ENCODE measurements at regions of chr7 and their contacts with region 1.

Region 1: DNA sequence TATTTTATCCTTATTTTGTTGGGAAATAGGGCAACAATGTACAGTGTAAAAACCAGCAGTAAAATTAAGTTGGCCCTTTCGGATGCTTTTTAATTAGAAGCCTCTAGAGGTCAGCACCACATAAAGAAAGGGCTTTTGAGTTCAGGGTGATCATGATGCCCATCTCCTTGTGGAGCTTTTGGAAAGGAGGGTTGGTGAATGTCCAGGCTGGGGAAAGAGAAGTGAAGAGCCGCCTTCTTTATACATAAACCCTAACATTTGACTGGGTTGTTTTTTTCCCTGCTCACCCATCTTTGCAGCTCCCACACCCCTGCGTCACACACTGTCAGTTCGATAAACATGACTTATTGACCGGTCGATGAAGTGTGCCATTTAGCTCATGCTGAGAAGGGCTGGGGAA is 29.8 kb downstream of the MTURN start:
- DNase-seq: peak; percentile 32 to 68
- H3K4me3 ChIP-seq: no peak overlapping the region
- H3K27ac ChIP-seq: no peak overlapping the region
- H3K4me1 ChIP-seq: peaks cover 52% of the 10 kb centered on the region
- H3K27me3 ChIP-seq: no peaks in the 10 kb centered on the region
- CTCF ChIP-seq: peak; percentile 86

Region 2: DNA sequence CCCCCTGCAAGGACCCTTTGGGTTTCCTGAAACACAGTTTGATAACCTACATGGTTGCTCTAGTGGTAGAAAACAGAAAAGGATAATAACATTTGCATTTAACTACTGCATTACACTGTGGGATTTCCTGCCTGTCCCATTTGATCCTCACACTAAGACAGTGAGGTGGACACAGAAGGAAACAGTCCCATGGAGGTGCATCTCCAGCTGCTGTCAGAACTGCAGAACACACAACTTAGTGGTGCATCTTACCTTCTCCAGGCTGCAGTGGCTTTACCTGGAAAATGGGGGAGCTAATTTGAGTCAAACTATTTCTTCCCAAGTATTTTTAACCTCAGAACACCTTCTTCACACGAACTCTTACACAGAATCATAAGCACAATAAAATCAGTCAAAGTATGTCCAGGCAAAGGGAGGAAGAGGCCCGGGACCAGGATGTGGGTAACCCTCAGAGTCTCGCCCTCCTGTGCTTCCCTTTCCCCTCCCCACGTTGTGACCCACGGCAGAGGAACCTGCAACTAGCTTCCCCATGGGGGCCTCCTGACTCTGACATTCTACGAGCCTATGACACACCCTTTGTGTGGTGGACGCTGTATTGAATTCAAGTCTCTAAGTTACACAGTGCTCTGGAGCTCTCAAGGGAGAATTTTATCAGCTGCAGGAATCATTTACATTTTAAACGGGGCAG is 208.6 kb before region 1 on chr7:
- CTCF ChIA-PET with region 1: no interaction called
- POLR2A ChIA-PET with region 1: no interaction called
- intact Hi-C with region 1: no loop called
- DNase-seq: no peak
- H3K4me3 ChIP-seq: no peak overlapping the region
- H3K27ac ChIP-seq: no peak overlapping the region
- H3K4me1 ChIP-seq: no peaks in the 10 kb centered on the region
- H3K27me3 ChIP-seq: no peaks in the 10 kb centered on the region
- CTCF ChIP-seq: no peak

Region 3: DNA sequence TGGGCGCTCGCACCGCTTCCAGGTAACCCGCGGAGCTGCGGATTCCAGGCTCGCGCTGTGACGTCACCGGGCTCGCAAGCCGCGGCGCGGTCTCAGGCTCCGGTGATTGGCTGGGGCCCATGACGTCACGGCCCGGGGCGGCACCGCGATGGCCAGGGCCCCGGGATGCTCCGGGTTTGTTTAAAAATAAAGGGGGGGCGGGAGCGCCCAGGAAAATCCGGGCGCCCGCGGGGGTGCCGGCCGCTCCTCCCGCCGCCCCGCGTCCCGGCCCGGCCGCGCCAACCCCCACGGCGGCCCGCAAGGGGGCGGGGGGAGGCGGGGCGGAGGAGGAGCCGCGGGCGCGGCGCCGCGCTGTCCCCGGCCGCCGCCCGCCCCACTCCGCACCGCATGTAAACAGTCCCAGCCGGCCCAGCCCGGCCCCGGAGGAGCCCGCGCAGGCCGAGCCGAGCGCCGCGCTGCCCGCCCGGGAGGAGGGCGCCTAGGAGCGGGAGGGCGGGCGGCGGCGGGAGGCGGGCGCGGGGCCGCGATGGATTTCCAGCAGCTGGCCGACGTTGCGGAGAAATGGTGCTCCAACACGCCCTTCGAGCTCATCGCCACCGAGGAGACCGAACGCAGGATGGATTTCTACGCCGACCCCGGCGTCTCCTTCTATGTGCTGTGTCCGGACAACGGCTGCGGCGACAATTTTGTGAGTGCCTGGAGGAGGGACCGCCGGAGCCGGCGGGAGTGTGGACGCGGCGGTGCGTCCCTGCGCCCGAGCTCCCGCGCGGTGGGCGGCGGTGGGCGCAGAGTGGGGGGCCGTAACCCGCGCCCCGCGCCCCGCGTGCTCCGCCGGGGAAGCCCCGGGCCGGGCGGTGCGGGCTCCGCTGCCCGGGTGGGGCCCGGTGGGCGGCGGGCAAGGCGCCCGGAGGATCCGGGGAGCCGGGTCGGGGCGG is 29.7 kb before region 1 on chr7 and contains the start of gene MTURN:
- CTCF ChIA-PET with region 1: no interaction called
- POLR2A ChIA-PET with region 1: no interaction called
- intact Hi-C with region 1: loop called (anchors 2 kb)
- DNase-seq: peak; percentile 81 to 94
- H3K4me3 ChIP-seq: peak within 1 kb of the TSS; percentile 55
- H3K27ac ChIP-seq: no peak within 1 kb of the TSS
- H3K4me1 ChIP-seq: peaks cover 8% of the 10 kb centered on the region; the same call in 1 of the 2 replicates
- H3K27me3 ChIP-seq: peaks cover 12% of the 10 kb centered on the region; the same call in 1 of the 2 replicates
- CTCF ChIP-seq: no peak
- total RNA-seq, gene MTURN: 21.6 and 23.1 TPM in 2 replicates

Region 4: DNA sequence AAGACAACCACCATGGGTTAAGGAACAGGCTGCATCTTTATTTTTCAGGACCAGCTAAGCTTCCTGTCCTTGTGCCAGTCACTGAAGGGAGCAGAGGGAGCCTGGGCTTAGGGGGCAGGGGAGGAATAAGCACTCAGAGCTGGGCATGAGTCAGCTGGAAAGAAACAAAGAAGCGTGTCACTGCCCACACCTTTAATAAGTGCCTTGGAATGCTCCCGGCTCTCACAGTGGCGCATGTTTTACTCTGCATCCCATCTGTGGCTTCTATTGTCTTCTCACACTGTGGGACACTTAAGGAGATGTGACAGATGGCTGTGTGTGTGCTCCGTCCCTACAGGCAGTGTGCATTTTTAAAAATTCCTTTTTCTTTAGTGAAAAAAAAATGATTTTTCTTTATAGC is 41.9 kb after region 1 on chr7:
- CTCF ChIA-PET with region 1: no interaction called
- POLR2A ChIA-PET with region 1: interaction called, 6 read pairs
- intact Hi-C with region 1: loop called (anchors 1 kb)
- DNase-seq: peak; percentile 79 to 88
- H3K4me3 ChIP-seq: peak overlapping the region; percentile 27; the same call in 1 of the 2 replicates
- H3K27ac ChIP-seq: peak overlapping the region; percentile 65
- H3K4me1 ChIP-seq: peaks cover 15% of the 10 kb centered on the region
- H3K27me3 ChIP-seq: no peaks in the 10 kb centered on the region
- CTCF ChIP-seq: no peak

Region 5: DNA sequence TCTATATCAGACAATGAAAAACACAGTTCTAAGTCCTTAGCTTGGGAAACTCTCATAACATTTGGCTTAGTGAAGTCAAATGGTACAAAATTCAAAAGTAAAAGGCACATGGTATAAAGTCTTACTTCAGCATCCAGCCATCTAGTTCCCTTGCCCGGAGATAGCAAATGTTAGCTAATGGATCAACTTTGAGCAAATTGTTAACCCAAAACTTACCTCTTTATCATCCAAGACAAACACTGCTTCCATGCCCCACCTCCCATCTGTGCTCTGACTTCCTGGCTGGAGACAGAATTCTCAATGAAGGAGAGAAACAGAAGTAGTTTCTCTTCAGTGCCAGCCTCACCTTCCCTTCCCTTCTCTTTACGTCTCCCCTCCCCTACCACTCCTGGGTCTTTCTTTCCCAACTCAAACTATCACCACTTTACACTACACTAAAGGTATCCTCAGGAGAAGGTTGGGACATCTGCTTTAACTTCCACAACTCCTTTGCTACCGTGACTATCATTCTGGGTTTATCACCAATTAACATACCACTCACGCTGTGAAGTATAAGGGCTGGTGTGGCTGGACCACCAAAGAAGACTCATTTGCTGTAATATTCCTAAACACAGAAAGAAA is 98.6 kb after region 1 on chr7:
- CTCF ChIA-PET with region 1: interaction called, 11 read pairs
- POLR2A ChIA-PET with region 1: no interaction called
- intact Hi-C with region 1: no loop called
- DNase-seq: no peak
- H3K4me3 ChIP-seq: no peak overlapping the region
- H3K27ac ChIP-seq: no peak overlapping the region
- H3K4me1 ChIP-seq: no peaks in the 10 kb centered on the region
- H3K27me3 ChIP-seq: no peaks in the 10 kb centered on the region
- CTCF ChIP-seq: no peak

Region 6: DNA sequence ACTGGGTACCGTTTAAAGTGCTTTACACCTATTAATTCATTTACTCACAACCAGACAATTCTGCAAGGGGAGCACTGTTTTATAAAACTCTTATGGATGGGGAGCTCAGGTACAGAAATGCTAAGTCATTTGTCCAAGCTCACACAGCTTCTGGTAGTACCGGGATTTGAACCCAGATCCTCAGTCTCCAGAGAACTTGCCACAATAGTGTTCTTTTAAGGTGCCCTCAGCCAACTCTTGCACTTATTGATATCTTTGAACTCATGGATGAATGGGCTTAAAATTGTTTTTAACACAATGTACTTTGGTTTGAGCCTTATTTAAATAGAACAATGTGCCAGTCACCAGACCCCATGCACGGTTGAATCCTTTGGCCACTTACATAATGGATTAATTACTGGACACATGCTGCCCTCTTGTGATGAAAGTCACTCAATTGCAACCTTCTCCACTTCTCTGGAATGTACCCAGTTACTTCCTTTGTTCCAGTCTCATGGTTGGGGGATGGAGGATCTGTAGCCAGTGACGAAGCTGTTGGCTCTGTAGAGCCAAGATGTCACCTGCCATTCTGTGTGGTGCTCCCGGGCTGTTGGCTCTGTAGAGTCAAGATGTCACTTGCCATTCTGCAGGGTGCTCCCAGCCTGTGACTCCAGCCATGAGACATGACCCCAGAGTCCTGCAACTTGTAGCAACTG is 248.4 kb after region 1 on chr7:
- CTCF ChIA-PET with region 1: no interaction called
- POLR2A ChIA-PET with region 1: no interaction called
- intact Hi-C with region 1: loop called (anchors 1 kb)
- DNase-seq: peak; percentile 40 to 80
- H3K4me3 ChIP-seq: no peak overlapping the region
- H3K27ac ChIP-seq: no peak overlapping the region
- H3K4me1 ChIP-seq: no peaks in the 10 kb centered on the region
- H3K27me3 ChIP-seq: no peaks in the 10 kb centered on the region
- CTCF ChIP-seq: peak; percentile 84

Region 7: DNA sequence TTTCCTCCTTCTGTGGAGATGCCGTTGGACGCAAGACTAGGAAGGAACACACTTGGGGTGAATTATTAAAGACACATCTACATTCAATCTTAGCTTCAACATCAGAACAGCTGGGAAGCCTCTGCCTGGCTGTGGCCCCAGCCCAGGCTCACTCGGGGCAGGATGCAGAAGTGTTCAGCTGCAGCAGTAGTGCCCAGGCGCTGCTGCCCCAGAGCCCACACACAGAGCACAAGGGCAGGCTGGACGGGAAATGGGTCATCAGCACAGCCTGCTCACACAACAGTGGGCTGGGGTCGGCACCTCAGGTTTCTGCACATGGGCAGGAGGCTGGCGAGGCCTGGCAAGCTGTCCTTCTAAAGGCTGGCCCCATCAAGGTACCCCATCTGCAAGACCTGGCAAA is 271.5 kb after region 1 on chr7:
- CTCF ChIA-PET with region 1: no interaction called
- POLR2A ChIA-PET with region 1: no interaction called
- intact Hi-C with region 1: no loop called
- DNase-seq: no peak
- H3K4me3 ChIP-seq: no peak overlapping the region
- H3K27ac ChIP-seq: no peak overlapping the region
- H3K4me1 ChIP-seq: no peaks in the 10 kb centered on the region
- H3K27me3 ChIP-seq: no peaks in the 10 kb centered on the region
- CTCF ChIP-seq: no peak